Lower leg skin (tissue), 4 donors: ENCODE measurements at regions of chr21 and their contacts with region 1.

Region 1: DNA sequence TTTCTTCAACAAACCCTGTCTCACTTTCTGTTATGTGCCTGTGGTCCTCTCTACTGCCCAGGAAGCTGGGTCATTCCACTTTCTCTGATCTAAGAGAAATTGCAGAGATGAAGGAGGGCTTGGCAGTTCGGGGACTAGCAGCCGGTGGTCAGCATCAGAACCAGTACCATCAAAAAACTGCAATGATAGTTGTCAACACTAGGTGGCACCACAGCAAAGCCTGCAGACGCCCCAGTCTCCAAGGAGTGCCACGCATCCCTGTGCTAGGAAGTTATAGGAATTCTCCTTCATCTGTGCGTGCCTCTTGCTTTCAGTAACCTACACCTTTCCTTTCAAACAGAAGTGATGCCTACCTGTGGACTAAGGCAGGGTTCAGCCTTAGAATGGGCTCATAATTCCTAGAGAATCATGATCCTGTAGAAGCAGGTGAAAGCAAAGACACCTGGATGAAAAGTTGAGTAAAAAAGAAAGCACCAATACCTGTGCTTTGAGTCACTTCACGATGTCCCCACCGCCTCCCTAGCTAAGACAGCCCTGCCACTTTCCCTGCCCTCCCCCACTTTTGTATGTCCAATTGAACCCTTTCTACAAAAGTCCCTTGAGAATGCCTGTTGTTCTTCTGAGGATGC is 129.2 kb downstream of the ADAMTS1 start:
- DNase-seq: no peak
- H3K4me3 ChIP-seq: no peak overlapping the region
- CTCF ChIP-seq: no peak
- POLR2A ChIP-seq: no peak

Region 2: GRCh38 chr21:25881525-25882376 is 834.2 kb before region 1 on chr21:
- intact Hi-C with region 1: loop called (anchors 5 kb)
- DNase-seq: peak; percentile 29 to 92
- H3K4me3 ChIP-seq: no peak overlapping the region
- CTCF ChIP-seq: peak in 1 of 3 donors; percentile 52
- POLR2A ChIP-seq: no peak

Region 3: GRCh38 chr21:26679284-26679683 is 36.7 kb before region 1 on chr21:
- intact Hi-C with region 1: no loop called
- DNase-seq: no peak
- H3K4me3 ChIP-seq: no peak overlapping the region
- CTCF ChIP-seq: no peak
- POLR2A ChIP-seq: no peak